ENCODE measurements at regions of chr15 and their contacts with region 1.

Region 1: GRCh38 chr15:90221246-90221900 is 12.4 kb downstream of the CIB1 start:
- DNase-seq: peak; percentile 48
- H3K27ac ChIP-seq: peak overlapping the region; percentile 73
- CTCF ChIP-seq: peak; percentile 72

Region 2: GRCh38 chr15:90271459-90272166 is 50.2 kb after region 1 on chr15:
- CTCF ChIA-PET with region 1: no interaction called
- POLR2A ChIA-PET with region 1: interaction called, 11 read pairs
- DNase-seq: no peak
- H3K27ac ChIP-seq: peak overlapping the region; percentile 31
- CTCF ChIP-seq: no peak